Head of caudate nucleus (tissue), 42 donors: ENCODE measurements at regions of chr4 and their contacts with region 1.

Region 1: DNA sequence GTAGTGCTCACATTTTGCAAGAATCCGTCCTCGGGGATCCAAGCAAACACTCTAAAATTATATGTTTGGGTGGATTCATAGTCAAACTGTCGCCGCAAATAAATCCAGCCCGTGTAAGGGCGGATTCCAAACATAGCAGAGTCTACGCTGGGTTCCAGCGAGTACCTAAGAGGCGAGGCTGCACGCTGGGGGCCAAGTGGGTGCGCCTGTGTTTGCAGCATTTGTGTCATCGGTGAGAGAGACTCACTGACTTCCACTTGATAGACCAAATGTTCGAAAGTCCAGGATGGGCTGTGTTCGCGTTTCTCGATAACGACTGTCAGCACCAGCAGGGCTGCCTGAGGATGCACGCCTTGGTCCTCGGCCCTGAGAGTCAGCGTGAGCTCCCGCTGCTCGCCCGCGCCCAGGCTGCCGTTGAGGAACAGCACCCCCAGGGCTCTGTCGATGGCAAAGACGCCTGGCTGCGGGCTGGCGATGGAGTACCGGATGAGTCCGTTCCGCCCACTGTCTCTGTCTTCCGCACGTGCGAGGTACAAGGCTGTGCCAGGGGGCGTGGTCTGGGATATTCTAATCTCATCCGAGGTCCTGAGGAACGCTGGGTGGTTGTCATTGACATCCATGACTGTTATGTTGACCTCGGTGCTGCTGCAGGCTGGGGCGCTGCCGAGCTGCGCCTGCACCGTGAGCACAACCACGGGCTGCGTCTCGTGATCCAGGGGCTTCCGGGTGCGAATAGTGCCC is 158.7 kb downstream of the DCHS2 start:
- DNase-seq: peak; percentile 33 to 79 (median 61)

Region 2: GRCh38 chr4:153962311-153963039 is 370.4 kb before region 1 on chr4:
- intact Hi-C with region 1: no loop called
- DNase-seq: no peak

Region 3: GRCh38 chr4:154485127-154485773 is 152.4 kb after region 1 on chr4:
- intact Hi-C with region 1: no loop called
- DNase-seq: no peak

Region 4: DNA sequence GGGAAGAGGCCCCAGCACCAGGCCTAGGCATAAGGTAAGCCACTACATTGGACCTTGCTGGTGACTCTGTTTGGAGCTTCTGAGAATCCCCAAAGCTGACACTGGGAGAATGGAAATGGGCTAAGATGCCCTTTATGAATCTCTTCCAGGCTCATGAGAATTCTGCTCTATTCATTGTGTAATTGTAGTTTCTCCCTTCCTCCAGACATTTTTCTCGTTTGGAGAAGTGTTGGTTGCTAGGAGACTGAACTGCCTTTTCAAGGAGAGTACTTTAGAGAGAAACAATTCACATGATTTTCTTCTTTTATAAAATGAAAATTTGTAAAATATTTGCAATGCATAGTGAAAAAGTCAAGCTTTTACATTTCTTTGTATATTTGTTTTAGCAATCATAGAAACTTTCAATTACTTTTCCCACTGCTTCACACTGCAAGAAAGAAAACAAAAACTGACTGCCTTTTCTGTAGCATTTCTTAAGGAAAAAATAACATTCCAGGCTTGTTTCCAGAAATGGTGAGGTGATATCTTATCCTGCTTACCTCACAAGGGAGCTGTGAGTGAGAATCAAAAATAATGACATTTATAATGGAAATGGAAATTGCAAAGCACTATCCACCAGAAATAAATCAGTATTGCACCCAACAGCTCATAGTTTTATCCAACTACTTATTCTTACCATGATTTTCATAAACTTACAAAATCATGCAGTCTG is 183.6 kb after region 1 on chr4:
- intact Hi-C with region 1: loop called (anchors 10 kb)
- DNase-seq: peak in 2 of 42 donors; percentile 7 to 41

Region 5: GRCh38 chr4:154578919-154579318 is 246.1 kb after region 1 on chr4:
- intact Hi-C with region 1: no loop called
- DNase-seq: no peak